ENCODE measurements at regions of chr1 and their contacts with region 1.

Region 1: GRCh38 chr1:228139944-228140656 is at the start of gene GUK1:
- DNase-seq: peak; percentile 100
- ATAC-seq: peak; percentile 95
- H3K4me3 Mint-ChIP-seq: peak within 1 kb of the TSS; percentile 97
- H3K27ac Mint-ChIP-seq: peak within 1 kb of the TSS; percentile 98
- H3K4me1 Mint-ChIP-seq: peaks cover 24% of the 10 kb centered on the region
- H3K27me3 Mint-ChIP-seq: peaks cover 2% of the 10 kb centered on the region
- total RNA-seq, gene GUK1: 196 to 270 TPM

Region 2: GRCh38 chr1:228059634-228060457 is 80.3 kb before region 1 on chr1:
- CTCF ChIA-PET with region 1: no interaction called
- POLR2A ChIA-PET with region 1: no interaction called
- intact Hi-C with region 1: loop called in 1 of 2 experiments (anchors 1 kb)
- DNase-seq: peak; percentile 91
- ATAC-seq: peak; percentile 85
- H3K4me3 Mint-ChIP-seq: peak overlapping the region; percentile 51
- H3K27ac Mint-ChIP-seq: no peak overlapping the region
- H3K4me1 Mint-ChIP-seq: peaks cover 9% of the 10 kb centered on the region
- H3K27me3 Mint-ChIP-seq: peaks cover 30% of the 10 kb centered on the region

Region 3: GRCh38 chr1:228087771-228088251 is 52.3 kb before region 1 on chr1:
- CTCF ChIA-PET with region 1: no interaction called
- POLR2A ChIA-PET with region 1: no interaction called
- intact Hi-C with region 1: no loop called
- DNase-seq: peak; percentile 45
- ATAC-seq: peak; percentile 28
- H3K4me3 Mint-ChIP-seq: peak overlapping the region; percentile 44
- H3K27ac Mint-ChIP-seq: peak overlapping the region; percentile 79
- H3K4me1 Mint-ChIP-seq: peaks cover 87% of the 10 kb centered on the region
- H3K27me3 Mint-ChIP-seq: no peaks in the 10 kb centered on the region

Region 4: GRCh38 chr1:228102791-228103620 is 37.1 kb before region 1 on chr1 and contains the start of gene C1orf35:
- CTCF ChIA-PET with region 1: no interaction called
- POLR2A ChIA-PET with region 1: no interaction called
- intact Hi-C with region 1: loop called in 1 of 2 experiments (anchors 1 kb)
- DNase-seq: peak; percentile 97
- ATAC-seq: peak; percentile 90
- H3K4me3 Mint-ChIP-seq: peak within 1 kb of the TSS; percentile 89
- H3K27ac Mint-ChIP-seq: peak within 1 kb of the TSS; percentile 91
- H3K4me1 Mint-ChIP-seq: peaks cover 22% of the 10 kb centered on the region
- H3K27me3 Mint-ChIP-seq: no peaks in the 10 kb centered on the region
- total RNA-seq, gene C1orf35: 14.6 to 22.5 TPM

Region 5: DNA sequence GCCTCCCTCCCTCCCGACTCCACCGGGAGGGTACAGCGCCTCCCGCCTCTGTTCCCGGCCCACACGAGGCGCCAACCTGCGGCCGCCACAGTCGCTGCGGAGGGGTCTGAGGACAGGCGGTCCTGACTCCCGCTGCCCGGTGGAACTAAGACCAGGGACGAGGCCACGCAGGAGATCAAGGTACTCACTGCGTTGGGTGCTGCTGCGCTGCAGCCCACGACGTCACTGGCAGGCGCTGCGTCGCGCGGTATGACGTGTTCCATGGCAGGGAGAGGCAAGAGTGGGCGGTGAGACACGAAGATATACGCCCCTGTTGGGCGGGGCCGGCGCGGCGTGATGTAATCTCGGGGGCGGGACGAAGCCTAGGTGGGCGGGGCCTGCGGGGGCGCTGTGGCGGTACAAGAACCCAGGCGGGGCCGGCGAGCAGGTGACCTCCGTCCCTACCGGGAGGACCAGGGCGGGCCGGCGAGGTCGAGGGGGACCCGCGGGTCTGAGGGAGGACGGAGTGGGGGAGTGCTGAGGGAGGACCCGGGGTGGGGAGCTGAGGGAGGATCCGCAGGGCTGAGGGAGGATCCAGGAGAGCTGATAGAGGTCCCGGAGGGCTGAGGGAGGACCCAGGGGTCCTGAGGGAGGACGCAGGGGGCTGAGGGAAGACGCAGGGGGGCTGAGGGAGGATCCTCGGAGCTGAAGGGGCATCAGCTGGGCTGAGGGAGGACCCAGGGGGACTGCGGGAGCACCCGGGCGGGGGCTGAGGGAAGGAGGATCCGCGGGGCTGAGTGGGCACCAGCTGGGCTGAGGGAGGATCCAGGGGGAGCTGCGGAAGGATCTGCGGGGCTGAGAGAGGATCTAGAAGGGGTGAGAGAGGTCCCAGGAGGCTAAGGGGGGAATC is 30.8 kb before region 1 on chr1 and contains the start of gene MRPL55:
- CTCF ChIA-PET with region 1: no interaction called
- POLR2A ChIA-PET with region 1: no interaction called
- intact Hi-C with region 1: loop called (anchors 1 kb)
- DNase-seq: peak; percentile 99
- ATAC-seq: peak; percentile 92
- H3K4me3 Mint-ChIP-seq: peak within 1 kb of the TSS; percentile 90
- H3K27ac Mint-ChIP-seq: peak within 1 kb of the TSS; percentile 92
- H3K4me1 Mint-ChIP-seq: peaks cover 21% of the 10 kb centered on the region
- H3K27me3 Mint-ChIP-seq: no peaks in the 10 kb centered on the region
- total RNA-seq, gene MRPL55: 51.0 to 57.7 TPM

Region 6: GRCh38 chr1:228154670-228155571 is 14.8 kb after region 1 on chr1:
- CTCF ChIA-PET with region 1: interaction called, 9 read pairs
- POLR2A ChIA-PET with region 1: no interaction called
- intact Hi-C with region 1: loop called in 1 of 2 experiments (anchors 1 kb)
- DNase-seq: peak; percentile 79
- ATAC-seq: peak; percentile 89
- H3K4me3 Mint-ChIP-seq: no peak overlapping the region
- H3K27ac Mint-ChIP-seq: peak overlapping the region; percentile 83
- H3K4me1 Mint-ChIP-seq: peaks cover 19% of the 10 kb centered on the region
- H3K27me3 Mint-ChIP-seq: no peaks in the 10 kb centered on the region

Region 7: DNA sequence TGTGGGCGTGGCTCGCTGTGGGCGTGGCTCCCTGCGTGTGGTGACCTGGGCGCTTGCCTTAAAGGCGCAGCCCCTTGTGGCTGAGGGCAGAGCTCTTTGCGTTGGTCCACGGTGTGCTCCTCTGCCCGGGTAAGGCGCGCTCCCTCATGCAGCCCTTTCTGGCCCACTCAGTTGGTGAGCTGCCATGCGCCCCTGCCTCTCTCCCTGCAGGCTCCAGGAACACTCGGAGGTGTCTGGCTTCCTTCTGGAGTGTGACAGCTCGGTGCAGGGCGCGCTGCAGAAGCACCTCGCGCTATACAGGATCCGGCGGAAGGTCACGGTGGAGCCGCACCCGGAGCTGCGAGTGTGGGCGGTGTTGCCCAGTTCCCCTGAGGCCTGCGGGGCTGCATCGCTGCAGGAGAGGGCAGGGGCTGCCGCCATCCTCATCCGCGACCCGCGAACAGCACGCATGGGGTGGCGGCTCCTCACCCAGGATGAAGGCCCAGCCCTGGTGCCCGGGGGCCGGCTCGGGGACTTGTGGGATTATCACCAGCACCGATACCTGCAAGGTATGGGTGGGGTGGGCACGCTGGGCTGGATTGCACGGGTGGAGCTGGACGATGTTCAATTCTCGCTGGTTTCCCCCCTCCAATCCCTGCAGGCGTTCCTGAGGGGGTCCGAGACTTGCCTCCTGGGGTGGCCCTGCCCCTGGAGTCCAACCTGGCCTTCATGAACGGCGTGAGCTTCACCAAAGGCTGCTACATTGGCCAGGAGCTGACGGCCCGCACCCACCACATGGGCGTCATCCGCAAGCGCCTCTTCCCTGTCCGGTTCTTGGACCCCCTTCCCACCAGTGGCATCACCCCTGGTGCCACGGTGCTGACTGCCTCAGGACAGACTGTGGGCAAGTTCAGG is 34.6 kb after region 1 on chr1:
- CTCF ChIA-PET with region 1: no interaction called
- POLR2A ChIA-PET with region 1: interaction called, 4 read pairs
- intact Hi-C with region 1: loop called in 1 of 2 experiments (anchors 1 kb)
- DNase-seq: peak; percentile 59
- ATAC-seq: peak; percentile 67
- H3K4me3 Mint-ChIP-seq: no peak overlapping the region
- H3K27ac Mint-ChIP-seq: no peak overlapping the region
- H3K4me1 Mint-ChIP-seq: no peaks in the 10 kb centered on the region
- H3K27me3 Mint-ChIP-seq: no peaks in the 10 kb centered on the region

Region 8: DNA sequence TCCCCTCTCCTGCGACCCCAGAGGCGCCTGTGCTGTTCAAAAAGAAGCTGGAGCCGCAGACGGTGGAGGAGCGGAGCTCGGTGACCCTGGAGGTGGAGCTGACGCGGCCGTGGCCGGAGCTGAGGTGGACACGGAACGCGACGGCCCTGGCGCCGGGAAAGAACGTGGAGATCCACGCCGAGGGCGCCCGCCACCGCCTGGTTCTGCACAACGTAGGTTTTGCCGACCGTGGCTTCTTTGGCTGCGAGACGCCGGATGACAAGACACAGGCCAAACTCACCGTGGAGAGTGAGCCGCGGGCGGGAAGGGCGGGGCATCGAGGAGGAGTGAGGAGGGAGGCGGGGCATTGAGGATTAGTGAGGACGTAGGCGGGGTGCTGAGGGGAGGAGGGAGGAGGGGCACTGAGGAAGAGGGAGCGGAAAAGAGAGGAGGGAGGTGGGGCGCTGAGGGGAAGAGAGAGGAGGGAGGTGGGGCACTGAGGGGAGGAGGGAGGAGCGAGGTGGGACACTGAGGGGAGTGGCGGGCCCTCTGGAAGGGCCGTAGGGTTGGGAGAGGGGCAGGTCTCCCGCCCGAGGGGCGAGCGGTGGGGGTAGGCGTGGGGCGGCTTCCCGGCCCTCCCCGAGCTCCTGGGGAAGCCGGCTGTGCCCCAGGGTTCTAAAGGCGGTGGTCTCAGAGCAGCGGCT is 135.8 kb after region 1 on chr1:
- CTCF ChIA-PET with region 1: no interaction called
- POLR2A ChIA-PET with region 1: no interaction called
- intact Hi-C with region 1: loop called in 1 of 2 experiments (anchors 1 kb)
- DNase-seq: peak; percentile 94
- ATAC-seq: peak; percentile 96
- H3K4me3 Mint-ChIP-seq: peak overlapping the region; percentile 71
- H3K27ac Mint-ChIP-seq: no peak overlapping the region
- H3K4me1 Mint-ChIP-seq: peaks cover 6% of the 10 kb centered on the region
- H3K27me3 Mint-ChIP-seq: no peaks in the 10 kb centered on the region

Region 9: GRCh38 chr1:228374711-228375577 is 234.8 kb after region 1 on chr1:
- CTCF ChIA-PET with region 1: no interaction called
- POLR2A ChIA-PET with region 1: no interaction called
- intact Hi-C with region 1: no loop called
- DNase-seq: no peak
- ATAC-seq: no peak
- H3K4me3 Mint-ChIP-seq: no peak overlapping the region
- H3K27ac Mint-ChIP-seq: no peak overlapping the region
- H3K4me1 Mint-ChIP-seq: peaks cover 8% of the 10 kb centered on the region
- H3K27me3 Mint-ChIP-seq: peaks cover 7% of the 10 kb centered on the region